A673 (cell line): ENCODE measurements at regions of chr19 and their contacts with region 1.

Region 1: GRCh38 chr19:48391107-48391986 is at the start of gene KDELR1:
- DNase-seq: peak; percentile 79
- H3K4me3 ChIP-seq: peak within 1 kb of the TSS; percentile 100
- H3K27ac ChIP-seq: peak within 1 kb of the TSS; percentile 91
- H3K4me1 ChIP-seq: peaks cover 39% of the 10 kb centered on the region
- H3K27me3 ChIP-seq: no peaks in the 10 kb centered on the region
- CTCF ChIP-seq: peak; percentile 96
- total RNA-seq, gene KDELR1: 197 and 200 TPM in 2 replicates

Region 2: GRCh38 chr19:48372904-48373303 is 18.4 kb before region 1 on chr19:
- CTCF ChIA-PET with region 1: interaction called, 10 read pairs
- POLR2A ChIA-PET with region 1: no interaction called
- intact Hi-C with region 1: no loop called
- DNase-seq: peak; percentile 78
- H3K4me3 ChIP-seq: no peak overlapping the region
- H3K27ac ChIP-seq: peak overlapping the region; percentile 0
- H3K4me1 ChIP-seq: peaks cover 12% of the 10 kb centered on the region
- H3K27me3 ChIP-seq: no peaks in the 10 kb centered on the region
- CTCF ChIP-seq: no peak

Region 3: GRCh38 chr19:48445606-48446481 is 54.5 kb after region 1 on chr19 and contains the start of gene GRWD1:
- CTCF ChIA-PET with region 1: interaction called, 4 read pairs
- POLR2A ChIA-PET with region 1: no interaction called
- intact Hi-C with region 1: loop called (anchors 5 kb)
- DNase-seq: peak; percentile 98
- H3K4me3 ChIP-seq: peak within 1 kb of the TSS; percentile 94
- H3K27ac ChIP-seq: peak within 1 kb of the TSS; percentile 89
- H3K4me1 ChIP-seq: peaks cover 13% of the 10 kb centered on the region
- H3K27me3 ChIP-seq: no peaks in the 10 kb centered on the region
- CTCF ChIP-seq: 0 out of 2 replicates have a peak, but pooled peaks have one; percentile 11
- total RNA-seq, gene GRWD1: 86.4 and 109 TPM in 2 replicates

Region 4: DNA sequence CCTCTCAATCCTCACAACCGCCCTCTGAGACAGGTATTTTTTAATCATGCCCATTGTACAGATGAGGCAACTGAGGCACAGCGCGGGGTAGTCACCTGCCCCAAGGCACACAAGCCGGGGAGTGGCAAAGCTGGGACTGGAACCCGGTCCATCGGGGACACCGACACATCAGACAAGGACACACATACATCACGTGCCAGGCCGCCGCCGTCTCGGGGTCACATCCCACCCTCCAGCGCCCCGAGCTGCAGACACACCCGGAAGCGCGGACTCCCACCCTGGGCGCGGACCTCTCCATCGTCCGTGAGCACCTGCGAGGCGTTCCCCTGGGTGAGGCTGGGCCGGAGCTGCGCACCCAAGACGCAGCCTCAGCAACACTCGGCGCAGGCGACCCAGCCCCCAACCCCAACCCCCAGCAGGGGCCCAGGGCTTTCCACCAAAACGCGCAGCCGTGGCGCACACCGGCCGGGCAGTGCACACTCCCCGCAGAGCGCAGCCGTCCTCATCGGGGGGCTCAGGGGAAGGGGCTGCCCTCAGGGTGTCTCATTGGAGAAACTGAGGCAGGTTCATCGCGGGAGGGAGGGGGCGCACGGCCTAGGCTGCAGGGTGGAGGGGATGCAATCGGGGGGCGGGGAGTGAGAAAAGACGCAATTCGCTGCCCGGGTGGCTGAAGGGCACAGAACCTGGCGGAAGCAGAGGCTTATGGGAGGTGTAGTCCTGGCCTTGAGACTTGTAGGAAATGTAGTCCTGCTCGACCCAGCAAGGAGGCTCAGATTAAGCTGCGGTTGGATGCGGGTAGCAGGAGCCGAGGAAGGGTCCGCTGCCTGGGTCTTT is 122.2 kb after region 1 on chr19:
- CTCF ChIA-PET with region 1: no interaction called
- POLR2A ChIA-PET with region 1: no interaction called
- intact Hi-C with region 1: no loop called
- DNase-seq: peak; percentile 84
- H3K4me3 ChIP-seq: peak overlapping the region; percentile 58
- H3K27ac ChIP-seq: no peak overlapping the region
- H3K4me1 ChIP-seq: no peaks in the 10 kb centered on the region
- H3K27me3 ChIP-seq: no peaks in the 10 kb centered on the region
- CTCF ChIP-seq: no peak